Activated B cell treated with CpG ODN at 0.5 μM for 24 hours (primary cell): ENCODE measurements at regions of chr11 and their contacts with region 1.

Region 1: GRCh38 chr11:22244986-22245592 is 52.2 kb downstream of the ANO5 start:
- DNase-seq: no peak
- ATAC-seq: peak; percentile 61
- H3K4me3 Mint-ChIP-seq: no peak overlapping the region
- H3K27ac Mint-ChIP-seq: no peak overlapping the region
- H3K4me1 Mint-ChIP-seq: no peaks in the 10 kb centered on the region
- H3K27me3 Mint-ChIP-seq: peaks cover 4% of the 10 kb centered on the region
- CTCF ChIP-seq: no peak

Region 2: DNA sequence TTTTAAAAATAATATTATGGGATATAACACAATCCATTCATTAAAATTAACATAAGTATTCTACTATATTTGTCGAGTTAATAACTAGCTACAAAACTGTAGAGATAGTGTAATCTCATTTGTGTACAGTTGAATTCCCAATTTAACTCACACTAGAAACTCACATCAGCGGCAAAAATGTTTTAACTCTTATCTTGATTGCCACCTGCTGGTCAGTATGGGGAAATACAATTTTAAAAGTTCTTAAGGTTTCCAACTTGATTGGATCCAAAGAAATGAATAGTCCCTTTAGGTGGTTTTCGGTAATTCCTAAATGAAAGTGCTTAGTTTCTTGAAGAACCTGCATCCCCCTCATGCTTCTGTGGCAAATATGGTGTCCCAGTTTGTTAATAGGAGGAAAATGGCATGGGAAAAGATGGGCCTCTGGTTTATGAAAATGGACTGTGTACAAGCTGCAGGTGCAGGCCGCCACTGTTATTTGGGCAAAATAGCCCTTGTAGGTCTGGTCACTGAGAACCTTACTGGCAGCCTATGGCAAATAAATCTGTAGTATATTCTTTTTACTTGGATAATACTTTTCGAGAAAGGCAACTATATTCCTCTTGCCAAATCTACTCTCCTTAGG is 59.4 kb after region 1 on chr11:
- CTCF ChIA-PET with region 1: interaction called, 5 read pairs
- POLR2A ChIA-PET with region 1: no interaction called
- intact Hi-C with region 1: loop called (anchors 1 kb)
- DNase-seq: no peak
- ATAC-seq: no peak
- H3K4me3 Mint-ChIP-seq: no peak overlapping the region
- H3K27ac Mint-ChIP-seq: no peak overlapping the region
- H3K4me1 Mint-ChIP-seq: no peaks in the 10 kb centered on the region
- H3K27me3 Mint-ChIP-seq: peaks cover 5% of the 10 kb centered on the region
- CTCF ChIP-seq: no peak

Region 3: DNA sequence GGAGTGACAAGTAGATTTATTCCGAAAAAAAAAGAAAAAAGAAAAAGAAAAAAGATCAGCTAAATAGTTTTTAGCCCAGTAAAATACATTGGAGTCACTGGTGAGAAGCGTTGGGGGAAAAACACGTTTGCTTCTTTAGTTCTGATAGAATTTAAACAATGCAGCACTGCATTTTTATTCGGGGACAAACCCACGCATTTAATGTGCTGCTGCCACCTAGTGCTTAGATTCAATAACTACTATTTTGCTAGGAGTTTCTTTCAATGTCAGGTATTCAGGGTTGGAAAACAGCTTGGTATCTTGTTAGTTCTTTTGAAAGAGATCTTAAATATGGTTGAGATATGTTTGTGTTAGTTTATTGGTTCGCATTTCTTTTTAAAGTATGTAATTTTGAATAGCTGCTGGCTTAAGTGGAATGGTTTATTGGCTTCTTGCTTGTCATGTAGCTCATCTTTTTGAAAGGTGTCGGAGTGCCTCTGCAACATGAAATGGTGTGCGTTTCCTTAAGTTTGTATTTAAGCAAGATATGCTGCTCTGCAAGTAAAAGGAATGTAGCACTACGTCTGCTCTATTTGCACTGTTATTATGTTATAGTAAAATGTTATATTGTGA is 542.6 kb after region 1 on chr11:
- CTCF ChIA-PET with region 1: interaction called, 19 read pairs
- POLR2A ChIA-PET with region 1: no interaction called
- intact Hi-C with region 1: no loop called
- DNase-seq: no peak
- ATAC-seq: peak; percentile 40
- H3K4me3 Mint-ChIP-seq: no peak overlapping the region
- H3K27ac Mint-ChIP-seq: no peak overlapping the region
- H3K4me1 Mint-ChIP-seq: no peaks in the 10 kb centered on the region
- H3K27me3 Mint-ChIP-seq: peaks cover 3% of the 10 kb centered on the region
- CTCF ChIP-seq: peak; percentile 65